Stomach (tissue), 19 donors: ENCODE measurements at regions of chr20 and their contacts with region 1.

Region 1: DNA sequence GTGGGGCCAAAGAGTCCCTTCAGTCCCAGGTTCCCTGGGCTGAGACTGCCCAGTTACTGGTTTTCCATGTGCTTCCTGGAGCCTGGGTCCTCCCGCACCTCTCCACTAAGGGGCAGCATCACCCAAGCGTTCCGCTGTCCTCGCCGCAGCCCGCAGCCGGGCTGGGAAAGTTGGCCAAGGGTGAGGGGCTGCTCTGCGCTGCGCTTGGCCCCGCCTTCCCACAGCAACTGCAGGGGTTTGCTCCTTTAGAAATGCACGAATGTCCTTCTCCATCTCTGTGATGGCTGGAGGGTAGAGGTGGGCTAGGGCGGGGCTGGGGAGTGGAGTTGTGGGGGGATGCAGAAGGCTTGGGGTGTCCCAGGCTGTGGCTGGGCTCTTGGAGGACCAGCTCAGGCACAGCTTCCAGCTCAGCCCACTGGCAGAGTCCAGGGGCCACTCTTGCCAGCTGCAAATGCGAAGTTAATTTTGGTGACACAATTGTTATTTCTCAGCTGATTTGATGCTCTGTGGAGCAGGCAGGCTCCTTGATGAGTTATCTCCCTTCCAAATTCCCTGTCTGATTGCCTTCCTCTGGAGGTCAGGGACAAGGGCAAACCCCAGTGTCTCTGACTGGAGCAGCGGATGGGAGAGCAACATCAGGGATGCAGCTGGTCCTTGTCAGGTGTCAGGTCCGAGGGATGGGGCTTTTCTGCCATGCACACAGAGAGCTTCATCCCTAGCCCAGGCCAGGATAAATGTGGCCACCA is 63.2 kb downstream of the NOL4L start:
- DNase-seq: peak; percentile 73 to 92
- H3K4me3 ChIP-seq: no peak overlapping the region
- H3K27ac ChIP-seq: no peak overlapping the region
- H3K4me1 ChIP-seq: peaks cover 12 to 40% (median 29%) of the 10 kb centered on the region in 4 donors
- H3K27me3 ChIP-seq: no peaks in the 10 kb centered on the region
- CTCF ChIP-seq: peak in 5 of 7 experiments; percentile 77 to 87 (median 85)
- EP300 ChIP-seq: no peak
- POLR2A ChIP-seq: no peak

Region 2: GRCh38 chr20:32263398-32263954 is 258.5 kb before region 1 on chr20:
- intact Hi-C with region 1: no loop called
- DNase-seq: no peak
- H3K4me3 ChIP-seq: no peak overlapping the region
- H3K27ac ChIP-seq: no peak overlapping the region
- H3K4me1 ChIP-seq: peaks cover 0 to 7% (median 2%) of the 10 kb centered on the region in 4 donors
- H3K27me3 ChIP-seq: no peaks in the 10 kb centered on the region
- CTCF ChIP-seq: no peak
- EP300 ChIP-seq: no peak
- POLR2A ChIP-seq: no peak

Region 3: GRCh38 chr20:32652739-32653526 is 131.0 kb after region 1 on chr20:
- intact Hi-C with region 1: loop called (anchors 5 kb)
- DNase-seq: peak; percentile 88 to 94
- H3K4me3 ChIP-seq: no peak overlapping the region
- H3K27ac ChIP-seq: no peak overlapping the region
- H3K4me1 ChIP-seq: peaks cover 0 to 14% (median 9%) of the 10 kb centered on the region in 4 donors
- H3K27me3 ChIP-seq: peaks cover 0 to 2% (median 0%) of the 10 kb centered on the region in 3 donors
- CTCF ChIP-seq: peak in 6 of 7 experiments; percentile 87 to 96 (median 92)
- EP300 ChIP-seq: no peak
- POLR2A ChIP-seq: no peak

Region 4: GRCh38 chr20:32685541-32686529 is 163.9 kb after region 1 on chr20:
- intact Hi-C with region 1: no loop called
- DNase-seq: peak in 1 of 2 donors; percentile 69
- H3K4me3 ChIP-seq: no peak overlapping the region
- H3K27ac ChIP-seq: peak overlapping the region in 1 of 5 donors; percentile 19
- H3K4me1 ChIP-seq: peaks cover 0 to 15% (median 6%) of the 10 kb centered on the region in 4 donors
- H3K27me3 ChIP-seq: no peaks in the 10 kb centered on the region
- CTCF ChIP-seq: no peak
- EP300 ChIP-seq: no peak
- POLR2A ChIP-seq: no peak